ENCODE measurements at regions of chr14 and their contacts with region 1.

Region 1: GRCh38 chr14:55430024-55430690 is 10.3 kb downstream of the TBPL2 start:
- DNase-seq: peak; percentile 65
- CTCF ChIP-seq: peak; percentile 40

Region 2: GRCh38 chr14:55000381-55000780 is 429.8 kb before region 1 on chr14:
- CTCF ChIA-PET with region 1: no interaction called
- POLR2A ChIA-PET with region 1: no interaction called
- DNase-seq: no peak
- CTCF ChIP-seq: no peak

Region 3: DNA sequence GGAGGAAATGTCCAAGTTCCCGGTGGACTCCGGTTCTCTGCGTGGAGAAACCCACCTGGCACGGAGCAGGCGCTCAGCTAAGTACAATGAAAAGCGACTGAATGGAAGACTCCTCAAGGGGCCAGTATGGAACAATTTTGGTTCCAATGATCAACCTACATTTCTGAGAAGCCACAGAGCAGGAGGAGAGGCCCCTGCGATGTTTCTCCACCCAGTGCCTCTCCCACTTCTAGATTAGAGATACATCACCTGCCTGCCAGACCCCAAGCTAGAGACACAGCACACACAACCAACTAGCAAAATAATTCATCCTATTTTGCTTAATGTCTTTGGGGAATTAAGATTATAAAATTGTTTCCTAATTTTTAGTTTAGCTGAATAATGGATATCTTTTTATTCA is 57.3 kb before region 1 on chr14:
- CTCF ChIA-PET with region 1: no interaction called
- POLR2A ChIA-PET with region 1: no interaction called
- DNase-seq: no peak
- CTCF ChIP-seq: no peak

Region 4: DNA sequence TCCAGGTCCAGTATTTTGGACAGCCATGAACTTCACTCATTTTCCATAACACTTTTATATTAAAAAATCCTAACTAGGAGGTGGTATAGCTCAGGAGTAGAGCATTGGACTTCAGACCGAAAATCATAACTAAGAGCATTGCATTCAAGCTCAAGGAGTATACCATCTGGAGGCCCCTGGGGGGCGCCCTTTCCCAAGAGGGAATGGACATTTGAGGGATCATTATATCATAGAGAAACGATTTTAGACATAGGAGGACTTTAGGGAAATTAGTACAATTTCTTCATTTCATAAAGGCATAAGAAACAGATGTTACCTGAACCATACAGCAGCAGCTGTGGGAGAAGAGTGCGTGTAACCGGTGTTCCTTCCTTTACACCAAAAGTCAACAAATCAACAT is 13.3 kb before region 1 on chr14:
- CTCF ChIA-PET with region 1: interaction called, 12 read pairs
- POLR2A ChIA-PET with region 1: no interaction called
- DNase-seq: peak; percentile 14
- CTCF ChIP-seq: no peak

Region 5: DNA sequence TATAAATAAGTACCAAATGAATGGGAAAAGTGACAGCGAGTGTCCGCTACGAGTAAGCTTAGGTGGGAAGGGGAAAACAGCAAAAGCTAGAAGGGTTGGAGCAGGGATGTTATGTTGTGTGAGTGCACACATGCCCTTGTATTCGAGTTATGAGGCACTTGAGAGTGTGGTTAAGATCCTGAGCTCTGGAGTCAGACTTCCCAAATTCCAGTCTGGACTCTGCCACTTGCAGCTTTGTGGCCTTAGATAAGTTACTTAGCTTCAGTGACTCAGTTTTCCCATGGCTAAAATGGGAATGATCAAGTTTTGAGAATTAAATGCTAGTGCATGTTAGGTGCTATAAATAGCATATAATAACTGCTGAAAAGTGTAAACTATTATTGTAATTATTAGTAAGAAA is 194.8 kb after region 1 on chr14:
- CTCF ChIA-PET with region 1: no interaction called
- POLR2A ChIA-PET with region 1: no interaction called
- DNase-seq: no peak
- CTCF ChIP-seq: no peak